ENCODE measurements at regions of chr17 and their contacts with region 1.

Region 1: GRCh38 chr17:81959362-81960129 is 1.4 kb downstream of the NOTUM start:
- DNase-seq: peak; percentile 82
- H3K4me3 ChIP-seq: peak overlapping the region in 3 of 4 donors; percentile 15 to 49 (median 48)
- H3K27ac ChIP-seq: no peak overlapping the region
- H3K4me1 ChIP-seq: peaks cover 6 to 22% (median 17%) of the 10 kb centered on the region in 4 donors
- H3K27me3 ChIP-seq: peaks cover 80% of the 10 kb centered on the region
- CTCF ChIP-seq: peak in 4 of 5 experiments; percentile 45 to 79 (median 56)
- EP300 ChIP-seq: no peak
- POLR2A ChIP-seq: no peak

Region 2: DNA sequence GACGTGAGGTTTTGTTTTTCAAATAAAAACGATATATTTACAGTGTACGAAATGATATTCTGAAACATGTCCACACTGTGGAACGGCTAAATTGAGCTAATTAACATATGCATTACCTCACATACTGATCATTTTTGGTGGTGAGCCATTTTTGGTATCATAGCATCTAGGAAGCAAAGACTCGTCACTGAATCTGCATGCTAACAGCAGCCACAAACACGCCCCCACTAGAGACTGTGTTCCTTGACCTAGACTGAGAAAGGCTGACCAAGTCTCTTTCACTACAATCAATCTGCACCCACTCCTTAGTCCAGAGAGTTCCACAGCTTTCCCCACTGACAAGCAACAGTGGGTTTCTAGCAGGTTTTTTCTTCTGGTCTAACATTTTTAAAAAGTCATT is 352.1 kb before region 1 on chr17:
- in situ Hi-C with region 1: no loop called
- intact Hi-C with region 1: no loop called
- DNase-seq: no peak
- H3K4me3 ChIP-seq: no peak overlapping the region
- H3K27ac ChIP-seq: no peak overlapping the region
- H3K4me1 ChIP-seq: no peaks in the 10 kb centered on the region
- H3K27me3 ChIP-seq: no peaks in the 10 kb centered on the region
- CTCF ChIP-seq: no peak
- EP300 ChIP-seq: no peak
- POLR2A ChIP-seq: no peak

Region 3: DNA sequence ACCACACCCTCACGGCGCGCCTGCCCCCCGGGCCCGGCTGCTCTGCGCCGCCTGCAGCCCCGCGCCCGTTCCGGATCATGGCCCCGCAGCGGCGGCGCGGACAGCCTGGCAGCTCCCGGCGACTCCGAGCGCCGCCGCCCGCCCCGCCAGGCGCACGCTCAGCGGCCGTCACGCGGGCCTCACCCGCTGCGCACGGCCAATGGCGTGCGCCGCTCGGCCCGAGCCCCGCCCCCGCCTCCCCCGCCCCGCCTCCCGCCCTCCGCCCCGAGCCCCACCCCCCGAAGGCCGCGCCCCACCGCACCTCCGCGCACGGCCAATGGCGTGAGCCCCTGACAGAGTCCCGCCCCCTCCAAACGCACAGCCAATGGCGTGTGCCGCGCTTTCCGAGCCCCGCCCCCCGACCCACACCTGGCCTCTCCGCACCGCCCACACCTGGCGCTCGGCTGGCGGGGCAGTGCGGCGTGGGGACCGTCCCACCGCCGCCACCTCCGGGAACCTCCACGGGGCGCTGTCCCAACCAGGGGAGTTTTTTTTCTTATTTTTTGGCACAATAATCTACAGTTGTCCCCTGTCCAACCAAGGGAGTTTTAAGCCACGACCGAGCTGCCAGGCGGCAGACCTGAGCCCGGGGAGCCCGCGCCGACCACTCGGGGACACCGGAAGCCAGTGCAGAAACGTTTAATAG is 48.1 kb before region 1 on chr17 and contains the start of gene PCYT2:
- in situ Hi-C with region 1: no loop called
- intact Hi-C with region 1: no loop called
- DNase-seq: peak; percentile 96
- H3K4me3 ChIP-seq: peak within 1 kb of the TSS; percentile 71 to 90 (median 79)
- H3K27ac ChIP-seq: peak within 1 kb of the TSS; percentile 81 to 90 (median 86)
- H3K4me1 ChIP-seq: peaks cover 10 to 25% (median 13%) of the 10 kb centered on the region in 4 donors
- H3K27me3 ChIP-seq: no peaks in the 10 kb centered on the region
- CTCF ChIP-seq: peak in 3 of 5 experiments; percentile 10 to 41 (median 31)
- EP300 ChIP-seq: no peak
- POLR2A ChIP-seq: no peak
- total RNA-seq, gene PCYT2: 37.2 to 424 (median 77.1) TPM

Region 4: GRCh38 chr17:82020891-82021727 is 61.6 kb after region 1 on chr17:
- in situ Hi-C with region 1: no loop called
- intact Hi-C with region 1: loop called (anchors 2 kb)
- DNase-seq: peak; percentile 80
- H3K4me3 ChIP-seq: peak overlapping the region in 2 of 4 donors; percentile 71 to 95
- H3K27ac ChIP-seq: peak overlapping the region; percentile 82 to 89 (median 84)
- H3K4me1 ChIP-seq: peaks cover 20 to 42% (median 34%) of the 10 kb centered on the region in 4 donors
- H3K27me3 ChIP-seq: no peaks in the 10 kb centered on the region
- CTCF ChIP-seq: peak; percentile 59 to 87 (median 75)
- EP300 ChIP-seq: no peak
- POLR2A ChIP-seq: no peak

Region 5: GRCh38 chr17:82236142-82236981 is 276.8 kb after region 1 on chr17:
- in situ Hi-C with region 1: no loop called
- intact Hi-C with region 1: no loop called
- DNase-seq: peak; percentile 80
- H3K4me3 ChIP-seq: no peak overlapping the region
- H3K27ac ChIP-seq: peak overlapping the region; percentile 21 to 85 (median 59)
- H3K4me1 ChIP-seq: peaks cover 45 to 86% (median 62%) of the 10 kb centered on the region in 4 donors
- H3K27me3 ChIP-seq: no peaks in the 10 kb centered on the region
- CTCF ChIP-seq: peak; percentile 94 to 97 (median 96)
- EP300 ChIP-seq: no peak
- POLR2A ChIP-seq: no peak